ENCODE measurements at regions of chr16 and their contacts with region 1.

Region 1: DNA sequence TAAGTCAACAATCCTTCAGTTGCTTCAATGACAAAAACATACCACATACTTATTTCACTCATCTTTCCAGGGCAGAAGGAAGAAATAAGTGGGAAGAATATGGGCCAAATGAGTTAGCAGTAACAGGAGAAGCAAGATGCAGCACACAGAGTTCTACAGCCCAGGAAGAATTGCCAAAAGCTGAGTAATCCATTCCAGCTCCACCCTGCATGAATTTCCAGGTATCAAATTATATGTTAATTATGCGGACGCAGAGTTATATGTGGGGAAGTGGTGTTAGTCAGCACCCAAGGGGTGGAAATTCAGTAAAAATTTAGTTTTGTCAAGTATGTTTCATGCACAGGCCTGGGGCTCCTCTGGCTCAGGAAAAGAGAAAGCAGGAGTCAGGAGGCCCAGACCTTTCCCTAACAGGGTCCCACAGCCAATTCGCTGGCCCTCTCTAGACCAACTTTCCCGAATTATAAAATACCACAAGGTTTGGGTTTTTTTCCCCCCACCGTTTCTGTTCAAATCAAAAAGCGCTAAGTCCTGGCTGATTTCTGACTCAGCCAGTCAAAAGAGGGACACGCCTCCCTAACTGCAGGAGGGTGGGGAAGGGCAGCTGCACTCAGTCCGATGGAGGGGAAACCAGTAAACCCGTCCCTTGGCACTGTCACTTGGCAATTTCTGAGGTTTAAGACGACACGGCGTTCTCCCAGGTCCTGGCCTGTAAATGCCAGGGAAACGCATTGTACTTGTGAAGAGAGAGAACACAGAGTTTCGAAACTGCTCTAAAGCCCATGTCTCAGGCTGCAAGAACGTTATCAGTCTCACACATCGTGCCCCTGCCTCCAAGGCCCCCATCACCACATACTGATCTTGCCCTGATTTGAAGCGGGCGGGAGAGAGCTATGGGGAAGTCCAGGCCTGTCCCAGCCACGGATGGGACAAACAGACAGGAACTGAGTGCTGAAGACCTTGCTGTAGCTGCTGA is 58.1 kb downstream of the ZFHX3 start:
- DNase-seq: peak; percentile 95
- H3K4me3 ChIP-seq: peak overlapping the region in 3 of 4 donors; percentile 17 to 21 (median 20)
- H3K27ac ChIP-seq: peak overlapping the region; percentile 83 to 91 (median 86)
- H3K4me1 ChIP-seq: peaks cover 0 to 92% (median 85%) of the 10 kb centered on the region in 4 donors
- H3K27me3 ChIP-seq: no peaks in the 10 kb centered on the region
- CTCF ChIP-seq: no peak
- EP300 ChIP-seq: peak; percentile 75 to 87 (median 80)
- POLR2A ChIP-seq: no peak

Region 2: DNA sequence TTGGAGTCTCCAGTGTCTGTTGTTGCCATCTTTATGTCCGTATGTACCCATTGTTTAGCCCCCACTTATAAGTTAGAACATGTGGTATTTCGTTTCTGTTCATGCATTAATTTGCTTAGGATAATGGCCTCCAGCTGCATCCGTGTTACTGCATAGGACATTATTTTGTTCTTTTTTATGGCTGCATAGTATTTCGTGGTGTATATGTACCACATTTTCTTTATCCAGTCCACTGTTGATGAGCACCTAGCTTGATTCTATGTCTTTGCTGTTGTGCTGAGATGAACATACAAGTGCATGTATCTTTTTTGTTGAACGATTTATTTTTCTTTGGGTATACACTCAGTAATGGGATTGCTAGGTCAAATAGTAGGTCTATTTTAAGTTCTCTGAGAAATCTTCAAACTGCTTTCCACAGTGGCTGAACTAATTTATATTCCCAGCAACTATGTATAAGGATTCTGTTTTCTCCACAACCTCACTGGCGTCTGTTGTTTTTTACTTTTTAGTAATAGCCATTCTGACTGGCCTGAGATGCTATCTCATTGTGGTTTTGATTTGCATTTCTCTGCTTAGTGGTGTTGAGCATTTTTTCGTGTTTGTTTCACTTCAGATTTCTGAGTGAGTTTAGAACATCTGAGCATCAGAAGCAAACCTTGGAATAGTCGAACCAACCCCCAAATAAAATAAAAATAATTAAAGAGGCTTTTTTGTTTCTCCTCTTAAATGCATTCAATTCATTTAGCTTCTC is 246.7 kb before region 1 on chr16:
- intact Hi-C with region 1: no loop called
- DNase-seq: no peak
- H3K4me3 ChIP-seq: no peak overlapping the region
- H3K27ac ChIP-seq: no peak overlapping the region
- H3K4me1 ChIP-seq: peaks cover 0 to 19% (median 6%) of the 10 kb centered on the region in 4 donors
- H3K27me3 ChIP-seq: no peaks in the 10 kb centered on the region
- CTCF ChIP-seq: no peak
- EP300 ChIP-seq: no peak
- POLR2A ChIP-seq: no peak

Region 3: DNA sequence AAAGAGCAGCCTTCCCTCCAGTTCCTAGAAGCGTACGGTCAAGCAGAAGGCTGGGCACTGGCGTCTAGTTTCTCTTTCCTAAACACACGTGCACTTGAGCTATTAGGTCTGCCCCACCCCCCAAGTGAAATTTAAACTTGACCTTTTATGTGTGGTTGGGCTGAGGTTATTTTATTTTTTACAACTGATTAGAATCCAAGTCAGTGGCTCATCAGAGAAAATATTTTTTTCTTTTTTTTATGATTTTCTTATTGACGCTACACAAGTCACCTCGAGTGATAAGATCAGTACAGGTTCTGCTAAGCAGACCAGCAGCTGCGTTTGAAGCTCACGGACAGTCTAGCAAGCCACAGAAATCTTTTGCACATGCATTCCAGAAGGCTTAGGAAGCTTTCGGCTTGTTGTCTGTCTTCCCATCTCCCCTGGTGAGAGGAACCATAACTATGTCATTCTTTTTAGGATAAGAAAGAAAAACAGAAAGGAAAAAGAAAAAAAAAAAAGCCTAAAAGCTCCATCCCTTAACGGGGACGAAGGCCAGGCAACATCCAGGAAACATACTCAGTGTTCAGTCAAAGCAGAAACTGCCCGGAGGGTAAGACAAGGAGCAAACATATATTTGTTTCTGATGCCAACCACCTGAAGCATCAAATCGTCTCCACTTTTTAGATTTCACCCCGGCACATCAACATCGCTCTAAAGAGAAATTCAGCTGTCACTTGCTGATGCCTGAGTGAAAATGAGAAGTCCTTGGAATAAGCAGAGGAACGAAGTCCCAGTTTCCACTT is 36.9 kb before region 1 on chr16:
- intact Hi-C with region 1: loop called (anchors 5 kb)
- DNase-seq: no peak
- H3K4me3 ChIP-seq: peak overlapping the region in 2 of 4 donors; percentile 6 to 27
- H3K27ac ChIP-seq: peak overlapping the region in 3 of 4 donors; percentile 37 to 68 (median 56)
- H3K4me1 ChIP-seq: peaks cover 0 to 40% (median 28%) of the 10 kb centered on the region in 4 donors
- H3K27me3 ChIP-seq: no peaks in the 10 kb centered on the region
- CTCF ChIP-seq: no peak
- EP300 ChIP-seq: no peak
- POLR2A ChIP-seq: no peak

Region 4: DNA sequence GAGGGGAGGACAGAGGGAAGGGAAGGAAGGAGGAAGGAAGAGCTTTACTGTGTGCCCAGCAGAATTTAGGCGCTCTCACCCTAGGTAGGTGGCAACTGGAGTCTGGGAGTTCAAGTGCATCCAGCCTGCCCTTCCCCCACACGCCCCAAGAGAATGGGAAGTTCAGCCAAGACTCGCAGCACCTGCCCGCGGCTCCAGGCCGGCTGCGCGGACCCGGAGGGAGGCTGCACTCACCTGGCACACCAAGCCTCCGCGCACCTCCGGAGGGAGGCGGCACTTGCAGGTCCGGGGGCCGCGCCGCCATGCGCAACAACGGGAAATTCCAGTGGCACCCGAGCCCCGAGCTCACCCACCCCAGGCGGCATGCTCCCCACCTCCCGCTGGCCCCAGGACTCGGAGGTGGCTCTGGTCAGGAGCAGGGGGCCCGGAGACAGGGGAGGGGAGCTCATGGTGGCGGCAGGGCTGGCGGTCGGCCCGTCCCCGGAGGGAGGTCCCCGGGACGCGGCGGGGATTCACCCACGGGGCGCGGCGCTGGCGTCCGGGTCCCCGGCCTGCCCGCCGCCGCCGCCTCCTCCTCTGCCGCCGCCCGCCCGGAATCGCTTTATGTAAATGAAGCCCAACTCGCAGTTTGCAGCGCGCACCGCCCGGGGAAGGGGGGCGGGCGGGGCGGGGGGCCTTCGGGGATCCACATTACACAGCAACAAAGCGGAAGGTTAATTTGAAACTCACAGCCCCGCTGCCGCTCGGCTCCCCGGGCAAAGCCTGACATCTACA is 57.8 kb after region 1 on chr16 and contains the start of gene ZFHX3:
- intact Hi-C with region 1: loop called (anchors 2 kb)
- DNase-seq: peak; percentile 90
- H3K4me3 ChIP-seq: peak within 1 kb of the TSS; percentile 78 to 90 (median 84)
- H3K27ac ChIP-seq: peak within 1 kb of the TSS; percentile 94 to 99 (median 97)
- H3K4me1 ChIP-seq: peaks cover 3 to 92% (median 88%) of the 10 kb centered on the region in 4 donors
- H3K27me3 ChIP-seq: no peaks in the 10 kb centered on the region
- CTCF ChIP-seq: no peak
- EP300 ChIP-seq: no peak
- POLR2A ChIP-seq: peak in 1 of 2 donors; percentile 20
- total RNA-seq, gene ZFHX3: 17.8 to 38.8 (median 19.1) TPM

Region 5: GRCh38 chr16:73058221-73058615 is 68.4 kb after region 1 on chr16:
- intact Hi-C with region 1: no loop called
- DNase-seq: no peak
- H3K4me3 ChIP-seq: peak overlapping the region; percentile 78 to 96 (median 87)
- H3K27ac ChIP-seq: peak overlapping the region; percentile 94 to 99 (median 97)
- H3K4me1 ChIP-seq: peaks cover 0 to 63% (median 50%) of the 10 kb centered on the region in 4 donors
- H3K27me3 ChIP-seq: peaks cover 0 to 3% (median 3%) of the 10 kb centered on the region in 3 donors
- CTCF ChIP-seq: no peak
- EP300 ChIP-seq: no peak
- POLR2A ChIP-seq: no peak